Breast epithelium (tissue), 4 donors: ENCODE measurements at regions of chr12 and their contacts with region 1.

Region 1: DNA sequence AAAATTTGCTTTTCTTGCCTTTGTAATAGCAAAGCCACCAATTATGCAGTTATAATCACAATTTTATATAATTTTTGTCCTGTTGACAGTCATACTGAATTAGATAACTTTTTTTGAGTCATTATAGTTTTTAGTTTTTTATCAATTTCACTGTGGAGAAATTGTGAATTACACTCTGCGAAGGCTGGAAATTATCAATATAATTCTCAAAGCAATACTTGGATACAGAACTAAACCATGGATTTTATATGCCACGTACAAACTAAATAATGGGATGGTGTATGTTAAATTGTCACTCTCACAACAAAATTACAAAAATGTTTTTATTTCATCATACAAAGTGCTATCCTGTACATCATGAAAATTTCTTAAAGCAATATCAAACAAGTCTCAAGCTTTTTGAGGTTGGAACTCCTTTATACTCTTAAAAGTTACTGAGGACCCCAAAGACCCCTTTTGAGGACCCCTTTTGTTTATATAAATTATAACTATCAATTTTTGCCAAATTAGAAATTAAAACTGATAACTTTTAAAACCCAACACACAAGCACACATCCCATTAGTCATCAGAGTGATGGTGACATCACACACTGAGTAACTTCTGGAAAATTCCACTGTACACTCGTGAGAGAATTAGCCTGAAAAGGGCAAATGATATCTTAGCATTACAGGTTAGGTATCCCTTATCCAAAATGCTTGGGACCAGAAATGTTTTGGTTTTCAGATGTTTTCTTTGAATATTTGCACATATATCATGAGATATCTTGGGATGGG is 19.8 kb upstream of the AQP2 start:
- DNase-seq: no peak
- H3K4me3 ChIP-seq: no peak overlapping the region
- H3K27ac ChIP-seq: peak overlapping the region in 1 of 2 donors; percentile 21
- H3K4me1 ChIP-seq: no peaks in the 10 kb centered on the region
- H3K27me3 ChIP-seq: no peaks in the 10 kb centered on the region
- CTCF ChIP-seq: no peak
- POLR2A ChIP-seq: no peak

Region 2: DNA sequence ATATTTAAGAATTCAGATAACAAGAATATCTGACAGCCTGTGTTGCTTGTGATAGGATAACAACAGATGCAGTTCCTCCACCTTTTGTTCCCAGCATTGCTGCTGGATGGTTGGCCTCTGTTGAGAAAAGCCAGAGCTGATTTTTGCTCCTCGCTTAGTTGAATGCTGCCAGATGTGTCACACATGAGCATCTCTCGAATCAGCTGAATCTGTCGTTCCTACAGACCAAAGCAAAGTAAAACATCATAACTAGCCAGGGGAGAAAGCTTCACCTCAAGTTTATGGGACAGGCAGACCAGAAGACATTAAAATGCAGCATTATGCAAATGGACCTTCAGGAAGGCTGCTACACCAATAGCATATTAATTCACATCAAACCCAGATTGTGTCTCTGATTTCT is 74.5 kb after region 1 on chr12:
- intact Hi-C with region 1: loop called (anchors 2 kb)
- DNase-seq: no peak
- H3K4me3 ChIP-seq: no peak overlapping the region
- H3K27ac ChIP-seq: no peak overlapping the region
- H3K4me1 ChIP-seq: no peaks in the 10 kb centered on the region
- H3K27me3 ChIP-seq: no peaks in the 10 kb centered on the region
- CTCF ChIP-seq: no peak
- POLR2A ChIP-seq: no peak